B cell (primary cell): ENCODE measurements at regions of chr16 and their contacts with region 1.

Region 1: GRCh38 chr16:31179747-31180459 is at the start of gene FUS:
- DNase-seq: peak; percentile 98
- ATAC-seq: peak; percentile 71
- H3K4me3 ChIP-seq: peak within 1 kb of the TSS; percentile 58 to 98 (median 91)
- H3K4me3 Mint-ChIP-seq: peak within 1 kb of the TSS; percentile 99
- H3K27ac ChIP-seq: peak within 1 kb of the TSS; percentile 90 to 93
- H3K27ac Mint-ChIP-seq: peak within 1 kb of the TSS; percentile 100
- H3K4me1 ChIP-seq: peaks cover 41 to 56% of the 10 kb centered on the region in 2 donors
- H3K4me1 Mint-ChIP-seq: peaks cover 58% of the 10 kb centered on the region
- H3K27me3 ChIP-seq: no peaks in the 10 kb centered on the region
- H3K27me3 Mint-ChIP-seq: no peaks in the 10 kb centered on the region
- CTCF ChIP-seq: no peak
- total RNA-seq, gene FUS: 585 and 597 TPM in 2 replicates

Region 2: GRCh38 chr16:30934827-30935557 is 244.9 kb before region 1 on chr16:
- CTCF ChIA-PET with region 1: no interaction called
- POLR2A ChIA-PET with region 1: no interaction called
- intact Hi-C with region 1: no loop called
- DNase-seq: peak; percentile 45
- ATAC-seq: peak; percentile 53
- H3K4me3 ChIP-seq: no peak overlapping the region
- H3K4me3 Mint-ChIP-seq: no peak overlapping the region
- H3K27ac ChIP-seq: no peak overlapping the region
- H3K27ac Mint-ChIP-seq: no peak overlapping the region
- H3K4me1 ChIP-seq: peaks cover 6 to 8% of the 10 kb centered on the region in 2 donors
- H3K4me1 Mint-ChIP-seq: peaks cover 6% of the 10 kb centered on the region
- H3K27me3 ChIP-seq: no peaks in the 10 kb centered on the region
- H3K27me3 Mint-ChIP-seq: no peaks in the 10 kb centered on the region
- CTCF ChIP-seq: peak; percentile 60

Region 3: GRCh38 chr16:31032736-31033708 is 146.9 kb before region 1 on chr16 and contains the start of gene STX4:
- CTCF ChIA-PET with region 1: no interaction called
- POLR2A ChIA-PET with region 1: no interaction called
- intact Hi-C with region 1: loop called (anchors 1 kb)
- DNase-seq: peak; percentile 100
- ATAC-seq: peak; percentile 76
- H3K4me3 ChIP-seq: peak within 1 kb of the TSS; percentile 76 to 99 (median 90)
- H3K4me3 Mint-ChIP-seq: peak within 1 kb of the TSS; percentile 95
- H3K27ac ChIP-seq: peak within 1 kb of the TSS; percentile 99 to 100
- H3K27ac Mint-ChIP-seq: peak within 1 kb of the TSS; percentile 99
- H3K4me1 ChIP-seq: peaks cover 8 to 16% of the 10 kb centered on the region in 2 donors
- H3K4me1 Mint-ChIP-seq: peaks cover 21% of the 10 kb centered on the region
- H3K27me3 ChIP-seq: no peaks in the 10 kb centered on the region
- H3K27me3 Mint-ChIP-seq: no peaks in the 10 kb centered on the region
- CTCF ChIP-seq: no peak
- total RNA-seq, gene STX4: 111 and 120 TPM in 2 replicates

Region 4: DNA sequence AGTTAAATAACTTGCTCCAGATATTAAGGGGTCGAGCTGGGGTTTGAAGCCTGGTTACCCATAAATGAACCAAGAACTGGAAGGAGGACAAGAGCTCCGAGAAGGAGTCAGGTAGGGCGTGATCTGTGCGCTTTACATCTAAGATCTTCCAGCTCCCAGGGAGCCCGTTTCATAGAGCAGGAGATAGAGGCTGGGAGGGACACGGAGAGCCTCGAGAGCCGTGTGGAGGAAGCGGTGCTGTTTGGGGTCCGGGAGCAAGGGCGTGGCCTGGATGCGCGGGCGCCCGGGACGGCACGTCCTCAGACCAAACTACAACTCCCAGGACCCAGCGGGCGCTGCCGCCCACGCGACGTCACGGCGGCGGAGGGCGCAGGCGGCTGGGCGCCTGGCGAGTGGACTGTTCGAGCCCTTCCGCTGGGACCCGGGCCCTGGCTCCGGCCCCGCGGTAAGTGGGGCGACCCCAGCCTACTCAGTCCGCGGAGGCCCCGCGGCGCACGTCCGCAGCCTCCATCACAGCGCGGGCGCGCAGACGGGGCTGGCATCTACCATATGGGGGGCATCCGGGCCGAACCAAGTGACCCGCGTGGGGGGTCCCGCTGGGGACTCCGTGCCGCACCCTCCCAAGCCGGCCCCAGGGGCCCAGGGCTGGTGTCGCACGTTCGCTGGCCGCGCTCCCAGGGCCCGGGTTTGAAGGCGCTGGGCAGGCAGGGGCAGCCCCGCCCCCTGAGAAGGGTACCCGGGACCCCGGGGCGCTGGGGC is 71.7 kb before region 1 on chr16 and contains the start of gene BCKDK:
- CTCF ChIA-PET with region 1: no interaction called
- POLR2A ChIA-PET with region 1: no interaction called
- intact Hi-C with region 1: loop called (anchors 10 kb)
- DNase-seq: peak; percentile 74
- ATAC-seq: peak; percentile 77
- H3K4me3 ChIP-seq: peak within 1 kb of the TSS; percentile 41 to 82 (median 78)
- H3K4me3 Mint-ChIP-seq: peak within 1 kb of the TSS; percentile 91
- H3K27ac ChIP-seq: peak within 1 kb of the TSS in 1 of 2 donors; percentile 72
- H3K27ac Mint-ChIP-seq: peak within 1 kb of the TSS; percentile 82
- H3K4me1 ChIP-seq: peaks cover 7 to 18% of the 10 kb centered on the region in 2 donors
- H3K4me1 Mint-ChIP-seq: peaks cover 21% of the 10 kb centered on the region
- H3K27me3 ChIP-seq: no peaks in the 10 kb centered on the region
- H3K27me3 Mint-ChIP-seq: no peaks in the 10 kb centered on the region
- CTCF ChIP-seq: no peak
- total RNA-seq, gene BCKDK: 24.7 and 29.7 TPM in 2 replicates

Region 5: GRCh38 chr16:31202414-31203375 is 22.8 kb after region 1 on chr16 and contains the start of gene PYCARD:
- CTCF ChIA-PET with region 1: interaction called, 8 read pairs
- POLR2A ChIA-PET with region 1: interaction called, 36 read pairs
- intact Hi-C with region 1: loop called (anchors 1 kb)
- DNase-seq: no peak
- ATAC-seq: peak; percentile 34
- H3K4me3 ChIP-seq: peak within 1 kb of the TSS; percentile 59 to 86 (median 78)
- H3K4me3 Mint-ChIP-seq: peak within 1 kb of the TSS; percentile 92
- H3K27ac ChIP-seq: peak within 1 kb of the TSS; percentile 62 to 73
- H3K27ac Mint-ChIP-seq: peak within 1 kb of the TSS; percentile 95
- H3K4me1 ChIP-seq: peaks cover 32 to 48% of the 10 kb centered on the region in 2 donors
- H3K4me1 Mint-ChIP-seq: peaks cover 55% of the 10 kb centered on the region
- H3K27me3 ChIP-seq: no peaks in the 10 kb centered on the region
- H3K27me3 Mint-ChIP-seq: no peaks in the 10 kb centered on the region
- CTCF ChIP-seq: no peak
- total RNA-seq, gene PYCARD: 31.8 and 35.7 TPM in 2 replicates

Region 6: GRCh38 chr16:31333686-31334649 is 154.1 kb after region 1 on chr16:
- CTCF ChIA-PET with region 1: interaction called, 12 read pairs
- POLR2A ChIA-PET with region 1: interaction called, 5 read pairs
- intact Hi-C with region 1: no loop called
- DNase-seq: peak; percentile 68
- ATAC-seq: peak; percentile 85
- H3K4me3 ChIP-seq: no peak overlapping the region
- H3K4me3 Mint-ChIP-seq: no peak overlapping the region
- H3K27ac ChIP-seq: no peak overlapping the region
- H3K27ac Mint-ChIP-seq: no peak overlapping the region
- H3K4me1 ChIP-seq: peaks cover 7 to 19% of the 10 kb centered on the region in 2 donors
- H3K4me1 Mint-ChIP-seq: peaks cover 23% of the 10 kb centered on the region
- H3K27me3 ChIP-seq: peaks cover 0 to 28% (median 4%) of the 10 kb centered on the region in 4 experiments
- H3K27me3 Mint-ChIP-seq: peaks cover 12% of the 10 kb centered on the region
- CTCF ChIP-seq: peak; percentile 64